ENCODE measurements at regions of chr3 and their contacts with region 1.

Region 1: DNA sequence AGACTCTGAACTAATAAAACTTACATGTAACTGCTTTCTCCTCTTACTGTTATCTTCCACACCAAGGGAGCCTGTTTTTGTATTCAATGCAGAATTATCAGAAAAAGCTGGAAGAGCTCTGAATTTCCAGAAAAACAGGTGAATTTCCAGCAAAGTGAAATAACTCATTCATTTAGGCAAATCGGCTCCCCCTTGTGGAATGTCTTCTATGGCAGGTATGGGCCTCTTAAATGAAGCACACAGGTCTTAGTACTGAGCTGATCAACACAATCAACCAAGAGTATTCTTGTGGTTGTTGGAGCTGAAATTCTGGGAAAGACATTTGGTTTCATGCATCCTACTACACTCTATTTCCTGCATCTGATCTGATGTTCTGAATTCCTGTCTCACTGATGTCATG is 31.0 kb upstream of the PTPRG start:
- DNase-seq: no peak
- ATAC-seq: peak; percentile 74
- H3K4me3 Mint-ChIP-seq: no peak overlapping the region
- H3K27ac Mint-ChIP-seq: no peak overlapping the region
- H3K4me1 Mint-ChIP-seq: peaks cover 52% of the 10 kb centered on the region
- H3K27me3 Mint-ChIP-seq: peaks cover 17% of the 10 kb centered on the region; the same call in 1 of the 2 replicates
- CTCF ChIP-seq: no peak

Region 2: DNA sequence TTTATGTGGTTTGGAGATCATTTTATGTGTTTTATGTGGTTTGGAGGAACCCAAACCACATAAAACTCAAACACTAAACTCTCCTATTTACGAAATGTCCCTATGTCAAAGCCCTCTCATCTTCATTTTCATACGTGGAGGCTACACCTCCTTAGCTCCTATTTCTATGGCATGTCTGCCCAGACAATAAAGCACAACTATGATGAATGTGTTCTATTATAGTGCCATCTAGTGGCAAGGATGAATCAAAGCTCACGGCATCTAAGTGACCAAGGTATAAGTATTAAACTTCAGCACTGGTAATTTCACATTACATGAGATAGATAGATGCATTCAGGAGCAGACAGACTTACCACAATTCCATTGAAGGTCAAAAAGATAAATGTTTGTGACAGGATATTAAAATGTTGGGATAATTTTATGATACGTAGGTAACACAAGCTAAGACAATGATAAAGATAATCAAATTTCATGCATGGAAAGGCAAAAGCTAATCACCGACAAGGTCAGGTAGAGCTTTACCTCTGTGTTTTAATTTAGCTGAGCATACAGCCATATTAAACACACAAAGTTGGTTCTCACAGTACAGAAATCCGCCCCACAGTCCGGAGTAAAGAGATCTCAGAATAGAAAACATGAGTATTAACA is 148.5 kb before region 1 on chr3:
- CTCF ChIA-PET with region 1: interaction called, 10 read pairs
- POLR2A ChIA-PET with region 1: no interaction called
- DNase-seq: no peak
- ATAC-seq: peak; percentile 78
- H3K4me3 Mint-ChIP-seq: no peak overlapping the region
- H3K27ac Mint-ChIP-seq: no peak overlapping the region
- H3K4me1 Mint-ChIP-seq: 0 out of 2 replicates have a peak, but pooled peaks cover 5% of the 10 kb centered on the region
- H3K27me3 Mint-ChIP-seq: no peaks in the 10 kb centered on the region
- CTCF ChIP-seq: peak; percentile 38; the same call in 1 of the 2 replicates

Region 3: GRCh38 chr3:61505197-61505596 is 25.2 kb before region 1 on chr3:
- CTCF ChIA-PET with region 1: interaction called, 10 read pairs
- POLR2A ChIA-PET with region 1: no interaction called
- DNase-seq: peak; percentile 19
- ATAC-seq: peak; percentile 85
- H3K4me3 Mint-ChIP-seq: no peak overlapping the region
- H3K27ac Mint-ChIP-seq: no peak overlapping the region
- H3K4me1 Mint-ChIP-seq: no peaks in the 10 kb centered on the region
- H3K27me3 Mint-ChIP-seq: no peaks in the 10 kb centered on the region; the same call in 1 of the 2 replicates
- CTCF ChIP-seq: no peak

Region 4: DNA sequence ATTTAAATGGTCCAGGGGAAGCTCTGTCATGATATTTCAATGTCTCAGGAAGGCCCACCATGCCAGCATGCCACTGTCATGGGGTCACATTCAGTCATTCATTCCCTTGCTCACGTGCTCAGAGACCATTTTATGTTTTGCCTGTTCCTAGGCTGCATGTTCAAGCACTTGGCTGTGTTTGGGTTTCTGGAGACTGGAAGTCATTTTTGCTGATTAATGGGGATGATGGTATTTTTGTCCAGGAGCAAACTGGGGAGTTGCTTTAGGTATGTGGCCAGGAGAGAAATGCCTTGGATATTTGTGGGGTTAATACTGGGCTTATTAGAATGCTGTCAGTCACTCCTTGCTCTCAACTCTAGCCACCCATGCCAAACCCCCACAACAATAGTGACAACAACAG is 334.5 kb after region 1 on chr3:
- CTCF ChIA-PET with region 1: no interaction called
- POLR2A ChIA-PET with region 1: no interaction called
- DNase-seq: no peak
- ATAC-seq: no peak
- H3K4me3 Mint-ChIP-seq: no peak overlapping the region
- H3K27ac Mint-ChIP-seq: peak overlapping the region; percentile 81; the same call in 1 of the 2 replicates
- H3K4me1 Mint-ChIP-seq: peaks cover 88% of the 10 kb centered on the region
- H3K27me3 Mint-ChIP-seq: no peaks in the 10 kb centered on the region
- CTCF ChIP-seq: no peak